H1 (cell line): ENCODE measurements at regions of chr5 and their contacts with region 1.

Region 1: GRCh38 chr5:153964880-153965645 is 73.6 kb downstream of the FAM114A2 start:
- DNase-seq: peak in 1 of 2 experiments; percentile 81
- H3K4me3 ChIP-seq: peak overlapping the region in 3 of 4 experiments; percentile 4 to 46 (median 8); a peak in 4 of 8 replicates
- H3K27ac ChIP-seq: no peak overlapping the region
- H3K4me1 ChIP-seq: peaks cover 4 to 13% (median 7%) of the 10 kb centered on the region in 4 experiments; a peak in 6 of 7 replicates
- H3K27me3 ChIP-seq: no peaks in the 10 kb centered on the region; a peak in 1 of 7 replicates
- CTCF ChIP-seq: peak; percentile 73 to 91 (median 82)
- EP300 ChIP-seq: no peak
- POLR2A ChIP-seq: no peak
- RAD21 ChIP-seq: peak; percentile 98 to 99

Region 2: GRCh38 chr5:152532714-152533113 is 1432.3 kb before region 1 on chr5:
- CTCF ChIA-PET with region 1: interaction called, 30 read pairs
- POLR2A ChIA-PET with region 1: interaction called, 3 read pairs
- DNase-seq: no peak
- H3K4me3 ChIP-seq: no peak overlapping the region
- H3K27ac ChIP-seq: no peak overlapping the region
- H3K4me1 ChIP-seq: peaks cover 0 to 15% (median 4%) of the 10 kb centered on the region in 4 experiments; a peak in 5 of 7 replicates
- H3K27me3 ChIP-seq: no peaks in the 10 kb centered on the region
- CTCF ChIP-seq: peak in 2 of 3 experiments; percentile 45 to 46; a peak in 2 of 4 replicates
- EP300 ChIP-seq: no peak
- POLR2A ChIP-seq: no peak
- RAD21 ChIP-seq: peak; percentile 85 to 90

Region 3: DNA sequence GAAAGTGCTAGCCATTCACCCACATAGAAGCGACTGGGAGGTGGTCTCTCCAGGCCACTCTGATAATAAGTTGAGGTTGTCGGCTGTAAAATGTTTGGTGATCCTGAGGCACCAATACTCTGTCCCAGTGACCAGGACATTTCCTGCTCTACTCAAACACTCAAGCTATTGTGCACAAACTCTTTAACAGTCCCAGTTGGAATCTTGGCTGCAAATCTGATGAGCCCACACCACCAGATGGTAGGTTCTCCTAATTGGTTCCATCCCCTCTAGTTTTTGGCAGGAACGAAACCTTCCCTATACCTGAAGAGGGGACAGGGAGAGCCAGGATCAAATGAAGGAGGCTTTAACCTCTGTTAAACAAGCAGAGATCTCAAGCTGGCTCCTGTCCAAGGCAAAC is 460.3 kb before region 1 on chr5:
- CTCF ChIA-PET with region 1: interaction called, 15 read pairs
- POLR2A ChIA-PET with region 1: no interaction called
- DNase-seq: no peak
- H3K4me3 ChIP-seq: no peak overlapping the region
- H3K27ac ChIP-seq: no peak overlapping the region
- H3K4me1 ChIP-seq: no peaks in the 10 kb centered on the region
- H3K27me3 ChIP-seq: no peaks in the 10 kb centered on the region
- CTCF ChIP-seq: no peak
- EP300 ChIP-seq: no peak
- POLR2A ChIP-seq: no peak
- RAD21 ChIP-seq: no peak

Region 4: DNA sequence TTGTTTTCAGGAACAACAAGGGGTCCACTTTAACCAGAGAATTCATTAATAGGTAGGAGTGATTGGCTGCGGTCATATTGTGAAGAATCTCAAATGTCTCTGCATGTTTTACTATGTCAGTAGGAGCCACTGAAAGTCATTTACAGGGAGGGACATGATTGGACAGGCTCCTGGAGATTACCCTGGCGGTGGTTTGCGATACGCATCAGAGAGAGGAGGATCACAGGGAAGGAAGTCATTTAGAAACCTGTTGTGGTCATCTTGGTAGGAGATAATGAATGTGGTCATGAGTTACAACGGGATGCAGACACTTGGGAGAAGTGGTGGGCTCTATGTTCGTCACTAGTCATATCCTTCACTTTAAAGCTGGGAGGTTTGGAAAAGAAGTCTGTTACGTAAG is 189.1 kb before region 1 on chr5:
- CTCF ChIA-PET with region 1: interaction called, 10 read pairs
- POLR2A ChIA-PET with region 1: no interaction called
- DNase-seq: no peak
- H3K4me3 ChIP-seq: no peak overlapping the region
- H3K27ac ChIP-seq: no peak overlapping the region
- H3K4me1 ChIP-seq: peaks cover 0 to 7% (median 4%) of the 10 kb centered on the region in 4 experiments; a peak in 3 of 7 replicates
- H3K27me3 ChIP-seq: no peaks in the 10 kb centered on the region
- CTCF ChIP-seq: no peak
- EP300 ChIP-seq: no peak
- POLR2A ChIP-seq: no peak
- RAD21 ChIP-seq: no peak

Region 5: GRCh38 chr5:153816870-153817269 is 148.2 kb before region 1 on chr5:
- CTCF ChIA-PET with region 1: interaction called, 32 read pairs
- POLR2A ChIA-PET with region 1: no interaction called
- DNase-seq: no peak
- H3K4me3 ChIP-seq: no peak overlapping the region
- H3K27ac ChIP-seq: no peak overlapping the region
- H3K4me1 ChIP-seq: no peaks in the 10 kb centered on the region
- H3K27me3 ChIP-seq: peaks cover 0 to 2% (median 0%) of the 10 kb centered on the region in 4 experiments; a peak in 1 of 7 replicates
- CTCF ChIP-seq: peak in 1 of 3 experiments; percentile 2; a peak in 1 of 4 replicates
- EP300 ChIP-seq: no peak
- POLR2A ChIP-seq: no peak
- RAD21 ChIP-seq: peak; percentile 44 to 58

Region 6: GRCh38 chr5:153952893-153953292 is 12.2 kb before region 1 on chr5:
- CTCF ChIA-PET with region 1: interaction called, 14 read pairs
- POLR2A ChIA-PET with region 1: interaction called, 4 read pairs
- DNase-seq: no peak
- H3K4me3 ChIP-seq: no peak overlapping the region
- H3K27ac ChIP-seq: no peak overlapping the region
- H3K4me1 ChIP-seq: no peaks in the 10 kb centered on the region
- H3K27me3 ChIP-seq: no peaks in the 10 kb centered on the region
- CTCF ChIP-seq: no peak
- EP300 ChIP-seq: no peak
- POLR2A ChIP-seq: no peak
- RAD21 ChIP-seq: no peak

Region 7: DNA sequence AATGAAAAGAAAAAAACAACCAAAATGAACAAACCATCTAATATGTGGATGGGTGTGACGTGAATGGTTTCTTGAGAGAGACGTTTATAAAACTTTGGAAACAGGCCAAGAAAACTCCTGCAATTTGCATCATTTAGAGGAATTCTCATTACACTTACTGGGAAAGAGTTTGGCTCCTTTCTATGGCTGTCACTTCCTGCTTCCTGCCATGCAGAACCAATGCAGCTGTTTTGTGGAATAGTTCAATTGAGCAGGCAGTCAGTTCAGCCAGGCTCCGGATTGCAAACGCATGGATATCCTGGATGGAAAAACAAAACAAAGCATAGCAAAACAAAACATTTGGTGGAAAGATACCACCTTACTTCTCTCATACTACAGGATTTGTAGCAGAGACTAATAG is 37.0 kb after region 1 on chr5:
- CTCF ChIA-PET with region 1: no interaction called
- POLR2A ChIA-PET with region 1: no interaction called
- DNase-seq: no peak
- H3K4me3 ChIP-seq: no peak overlapping the region
- H3K27ac ChIP-seq: no peak overlapping the region
- H3K4me1 ChIP-seq: no peaks in the 10 kb centered on the region
- H3K27me3 ChIP-seq: no peaks in the 10 kb centered on the region
- CTCF ChIP-seq: no peak
- EP300 ChIP-seq: no peak
- POLR2A ChIP-seq: no peak
- RAD21 ChIP-seq: no peak

Region 8: GRCh38 chr5:154025951-154026350 is 60.9 kb after region 1 on chr5:
- CTCF ChIA-PET with region 1: no interaction called
- POLR2A ChIA-PET with region 1: no interaction called
- DNase-seq: no peak
- H3K4me3 ChIP-seq: no peak overlapping the region
- H3K27ac ChIP-seq: no peak overlapping the region
- H3K4me1 ChIP-seq: no peaks in the 10 kb centered on the region
- H3K27me3 ChIP-seq: no peaks in the 10 kb centered on the region
- CTCF ChIP-seq: no peak
- EP300 ChIP-seq: no peak
- POLR2A ChIP-seq: no peak
- RAD21 ChIP-seq: no peak

Region 9: DNA sequence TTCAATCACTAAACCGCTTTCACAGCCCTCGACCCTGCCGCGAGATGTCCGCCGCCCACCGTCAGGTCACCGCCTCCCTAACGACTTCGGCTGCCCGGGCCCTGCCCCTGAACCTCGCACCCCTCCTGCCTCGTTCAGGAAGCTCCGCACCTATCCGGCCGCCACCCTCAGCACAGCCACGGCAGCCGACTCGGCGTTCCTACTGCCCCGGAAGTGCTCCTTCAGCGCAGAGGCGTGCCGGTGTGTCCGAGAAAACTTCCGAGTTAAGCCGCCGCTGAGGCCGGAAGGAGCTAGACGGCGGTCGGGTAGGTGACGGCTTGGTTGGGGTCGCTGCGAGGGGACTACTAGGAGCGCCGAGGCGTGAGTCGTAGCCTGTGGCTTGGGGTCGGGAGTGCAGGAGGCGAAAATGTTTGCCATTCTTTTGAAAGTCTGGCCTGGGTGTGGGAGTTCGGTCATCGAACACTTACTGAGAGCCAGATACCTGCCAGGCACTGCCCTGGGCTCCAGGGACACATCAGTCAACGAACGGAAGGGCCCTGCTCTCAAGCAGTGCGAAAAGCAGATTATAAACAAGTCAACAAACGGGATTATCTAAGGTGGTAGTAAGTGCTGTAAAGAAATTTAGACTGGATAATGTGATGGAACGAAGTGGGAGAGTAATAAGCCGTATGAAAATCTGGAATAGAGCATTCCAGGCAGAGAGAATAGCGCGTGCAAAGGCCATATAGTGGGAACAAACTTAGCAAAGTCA is 73.8 kb after region 1 on chr5 and contains the starts of genes FAM114A2 and MFAP3:
- CTCF ChIA-PET with region 1: no interaction called
- POLR2A ChIA-PET with region 1: no interaction called
- DNase-seq: peak; percentile 81 to 87
- H3K4me3 ChIP-seq: peak within 1 kb of the TSS; percentile 89 to 95 (median 91)
- H3K27ac ChIP-seq: no peak within 1 kb of the TSS; the same call in 1 of the 2 replicates
- H3K4me1 ChIP-seq: 0 out of 7 replicates have a peak, but pooled peaks cover 0 to 2% (median 0%) of the 10 kb centered on the region in 4 experiments
- H3K27me3 ChIP-seq: no peaks in the 10 kb centered on the region
- CTCF ChIP-seq: no peak
- EP300 ChIP-seq: no peak
- POLR2A ChIP-seq: peak in 1 of 2 experiments; percentile 74; a peak in 1 of 3 replicates
- RAD21 ChIP-seq: peak in 1 of 2 experiments; percentile 18; a peak in 2 of 4 replicates
- total RNA-seq, gene FAM114A2: 9.2 and 9.7 TPM in 2 replicates
- total RNA-seq, gene MFAP3: 24.1 and 27.0 TPM in 2 replicates

Region 10: DNA sequence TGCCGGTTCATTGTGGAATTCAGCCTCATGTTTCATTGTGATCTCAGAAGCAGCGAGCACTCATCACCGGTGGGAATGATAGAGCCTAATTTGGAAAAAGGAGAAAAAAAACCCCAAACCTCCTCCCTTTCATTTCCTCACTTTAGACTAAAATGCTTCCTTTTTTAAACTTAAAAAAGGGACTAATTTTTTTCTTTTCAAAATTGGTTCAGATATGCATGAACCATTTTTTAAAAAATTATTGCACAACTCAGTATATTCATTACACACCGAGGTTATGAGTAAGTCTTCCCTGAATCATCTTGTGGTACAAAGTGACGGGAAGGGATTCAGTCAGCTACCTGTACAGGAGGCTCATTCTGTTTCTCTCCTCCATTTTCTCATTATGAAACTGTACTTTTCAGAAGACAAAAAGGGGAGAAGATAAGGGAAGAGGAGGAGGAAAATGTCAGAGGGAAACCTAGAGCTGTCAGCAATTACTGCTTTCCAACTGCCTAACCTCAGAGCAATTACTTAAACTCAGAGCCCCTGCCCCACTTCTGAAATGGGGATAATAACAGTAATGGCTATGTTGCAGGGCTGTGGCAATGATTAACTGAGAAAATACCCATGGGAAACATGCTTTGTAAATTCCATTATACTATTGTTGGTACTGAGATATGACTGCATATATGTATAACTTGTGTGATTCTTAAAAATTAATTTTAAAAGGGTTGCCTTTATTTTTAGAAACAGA is 249.5 kb after region 1 on chr5:
- CTCF ChIA-PET with region 1: no interaction called
- POLR2A ChIA-PET with region 1: no interaction called
- DNase-seq: no peak
- H3K4me3 ChIP-seq: no peak overlapping the region
- H3K27ac ChIP-seq: no peak overlapping the region
- H3K4me1 ChIP-seq: peaks cover 4 to 10% (median 8%) of the 10 kb centered on the region in 4 experiments
- H3K27me3 ChIP-seq: no peaks in the 10 kb centered on the region
- CTCF ChIP-seq: no peak
- EP300 ChIP-seq: no peak
- POLR2A ChIP-seq: no peak
- RAD21 ChIP-seq: no peak